H1 (cell line): ENCODE measurements at regions of chr3 and their contacts with region 1.

Region 1: DNA sequence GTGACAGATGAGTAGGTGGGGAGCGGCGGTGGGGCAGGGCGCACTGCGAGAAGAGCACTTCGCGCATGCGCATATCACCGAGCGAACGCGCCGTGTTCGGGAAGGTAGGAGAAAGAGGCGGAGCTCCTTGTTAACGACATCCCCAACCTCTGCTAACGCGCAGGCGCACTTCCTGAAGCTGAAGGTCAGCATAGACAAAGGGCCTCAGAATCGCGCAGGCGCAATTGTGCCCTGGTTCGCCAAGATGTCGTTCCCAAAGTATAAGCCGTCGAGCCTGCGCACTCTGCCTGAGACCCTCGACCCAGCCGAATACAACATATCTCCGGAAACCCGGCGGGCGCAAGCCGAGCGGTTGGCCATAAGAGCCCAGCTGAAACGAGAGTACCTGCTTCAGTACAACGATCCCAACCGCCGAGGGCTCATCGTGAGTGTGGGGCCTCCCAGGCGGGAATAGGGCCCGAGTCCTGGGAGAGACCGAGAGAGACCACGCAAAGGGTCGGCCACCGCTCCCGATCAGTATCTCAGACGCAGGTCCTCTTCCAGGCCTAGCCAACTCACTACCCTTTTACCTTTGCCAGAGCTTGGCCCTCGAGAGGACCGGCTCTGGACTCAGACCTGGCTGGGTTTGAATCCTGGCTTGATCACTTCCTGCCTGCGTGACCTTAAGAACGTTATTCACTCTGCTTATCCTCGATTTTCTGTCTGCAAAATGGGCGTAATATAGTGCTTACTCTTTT is at the start of gene NDUFB4:
- DNase-seq: peak; percentile 95 to 98
- H3K4me3 ChIP-seq: peak within 1 kb of the TSS; percentile 78 to 98 (median 88)
- H3K27ac ChIP-seq: peak within 1 kb of the TSS; percentile 90
- H3K4me1 ChIP-seq: peaks cover 0 to 6% (median 0%) of the 10 kb centered on the region in 4 experiments; a peak in 4 of 7 replicates
- H3K27me3 ChIP-seq: no peaks in the 10 kb centered on the region
- CTCF ChIP-seq: no peak
- EP300 ChIP-seq: no peak
- POLR2A ChIP-seq: peak; percentile 73 to 96
- RAD21 ChIP-seq: peak in 1 of 2 experiments; percentile 3; a peak in 1 of 4 replicates
- total RNA-seq, gene NDUFB4: 184 and 194 TPM in 2 replicates

Region 2: GRCh38 chr3:120102674-120103073 is 493.6 kb before region 1 on chr3:
- CTCF ChIA-PET with region 1: no interaction called
- POLR2A ChIA-PET with region 1: no interaction called
- DNase-seq: no peak
- H3K4me3 ChIP-seq: no peak overlapping the region
- H3K27ac ChIP-seq: no peak overlapping the region
- H3K4me1 ChIP-seq: no peaks in the 10 kb centered on the region
- H3K27me3 ChIP-seq: no peaks in the 10 kb centered on the region
- CTCF ChIP-seq: no peak
- EP300 ChIP-seq: no peak
- POLR2A ChIP-seq: no peak; a peak in 1 of 3 replicates
- RAD21 ChIP-seq: no peak

Region 3: GRCh38 chr3:120567370-120568201 is 28.7 kb before region 1 on chr3:
- CTCF ChIA-PET with region 1: interaction called, 6 read pairs
- POLR2A ChIA-PET with region 1: interaction called, 12 read pairs
- DNase-seq: no peak
- H3K4me3 ChIP-seq: peak overlapping the region in 1 of 4 experiments; percentile 28; a peak in 2 of 8 replicates
- H3K27ac ChIP-seq: no peak overlapping the region
- H3K4me1 ChIP-seq: peaks cover 9 to 23% (median 14%) of the 10 kb centered on the region in 4 experiments
- H3K27me3 ChIP-seq: no peaks in the 10 kb centered on the region
- CTCF ChIP-seq: peak in 2 of 3 experiments; percentile 23 to 29; a peak in 2 of 4 replicates
- EP300 ChIP-seq: no peak
- POLR2A ChIP-seq: no peak
- RAD21 ChIP-seq: no peak; a peak in 1 of 4 replicates